ENCODE measurements at regions of chr13 and their contacts with region 1.

Region 1: GRCh38 chr13:113816946-113817859 is 46.7 kb downstream of the GAS6 start:
- DNase-seq: peak; percentile 92
- ATAC-seq: peak; percentile 55

Region 2: DNA sequence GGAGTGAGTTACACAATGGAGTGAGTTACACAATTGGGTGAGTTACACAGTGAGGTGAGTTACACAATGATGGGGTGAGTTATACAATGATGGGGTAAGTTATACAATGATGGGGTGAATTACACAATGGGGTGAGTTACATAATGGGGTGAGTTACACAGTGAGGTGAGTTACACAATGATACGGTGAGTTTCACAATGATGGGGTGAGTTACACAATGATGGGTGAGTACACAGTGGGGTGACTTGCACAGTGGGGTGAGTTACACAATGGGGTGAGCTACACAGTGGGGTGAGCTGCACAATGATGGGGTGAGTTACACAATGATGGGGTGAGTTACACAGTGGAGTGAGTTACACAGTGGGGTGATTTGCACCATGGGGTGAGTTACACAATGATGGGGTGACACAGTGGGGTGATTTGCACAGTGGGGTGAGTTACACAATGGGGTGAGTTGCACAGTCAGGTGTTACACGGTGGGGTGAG is 99.2 kb after region 1 on chr13:
- intact Hi-C with region 1: no loop called
- DNase-seq: no peak
- ATAC-seq: peak; percentile 60

Region 3: GRCh38 chr13:113947321-113948033 is 130.3 kb after region 1 on chr13:
- intact Hi-C with region 1: loop called (anchors 2 kb)
- DNase-seq: no peak
- ATAC-seq: peak; percentile 71